WTC11 (cell line): ENCODE measurements at regions of chr18 and their contacts with region 1.

Region 1: DNA sequence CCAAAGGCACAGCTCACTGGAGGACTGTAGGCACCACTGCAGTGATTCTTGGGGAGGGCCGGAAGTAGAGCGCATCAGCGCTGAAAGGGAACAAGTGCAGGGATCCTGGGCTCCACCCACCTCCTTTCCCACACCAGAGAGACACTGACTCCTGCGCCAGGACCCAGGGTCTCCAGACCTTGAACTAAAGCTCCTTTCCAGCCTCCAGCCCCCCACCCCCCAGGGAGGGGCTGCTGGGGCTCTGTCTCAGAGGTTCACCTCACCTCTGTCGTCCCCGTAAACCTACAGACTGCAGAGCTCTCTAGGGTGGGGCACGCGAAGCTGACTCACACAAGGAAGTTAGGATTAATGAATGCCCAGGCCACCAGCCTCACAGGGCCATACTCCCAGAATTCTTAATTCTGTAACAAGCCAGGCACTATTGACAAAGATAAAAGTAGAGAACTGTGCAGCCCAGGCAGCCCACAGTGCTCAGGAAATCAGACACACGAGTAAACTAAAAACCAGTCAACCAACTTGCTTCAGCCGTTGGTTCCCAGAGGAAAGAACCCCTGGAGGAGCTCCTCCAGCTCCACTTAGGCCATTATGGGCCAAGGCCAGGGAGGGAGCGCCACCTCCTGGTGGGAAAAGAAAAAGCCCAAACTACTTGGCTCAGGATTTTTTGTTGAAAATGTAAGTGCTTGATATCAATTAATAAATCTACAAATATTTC is 45.1 kb upstream of the ACAA2 start:
- DNase-seq: peak; percentile 79
- ATAC-seq: peak; percentile 75
- H3K4me3 Mint-ChIP-seq: no peak overlapping the region
- H3K27ac Mint-ChIP-seq: peak overlapping the region; percentile 57
- H3K4me1 Mint-ChIP-seq: peaks cover 12% of the 10 kb centered on the region
- H3K27me3 Mint-ChIP-seq: no peaks in the 10 kb centered on the region
- CTCF ChIP-seq: peak; percentile 86

Region 2: DNA sequence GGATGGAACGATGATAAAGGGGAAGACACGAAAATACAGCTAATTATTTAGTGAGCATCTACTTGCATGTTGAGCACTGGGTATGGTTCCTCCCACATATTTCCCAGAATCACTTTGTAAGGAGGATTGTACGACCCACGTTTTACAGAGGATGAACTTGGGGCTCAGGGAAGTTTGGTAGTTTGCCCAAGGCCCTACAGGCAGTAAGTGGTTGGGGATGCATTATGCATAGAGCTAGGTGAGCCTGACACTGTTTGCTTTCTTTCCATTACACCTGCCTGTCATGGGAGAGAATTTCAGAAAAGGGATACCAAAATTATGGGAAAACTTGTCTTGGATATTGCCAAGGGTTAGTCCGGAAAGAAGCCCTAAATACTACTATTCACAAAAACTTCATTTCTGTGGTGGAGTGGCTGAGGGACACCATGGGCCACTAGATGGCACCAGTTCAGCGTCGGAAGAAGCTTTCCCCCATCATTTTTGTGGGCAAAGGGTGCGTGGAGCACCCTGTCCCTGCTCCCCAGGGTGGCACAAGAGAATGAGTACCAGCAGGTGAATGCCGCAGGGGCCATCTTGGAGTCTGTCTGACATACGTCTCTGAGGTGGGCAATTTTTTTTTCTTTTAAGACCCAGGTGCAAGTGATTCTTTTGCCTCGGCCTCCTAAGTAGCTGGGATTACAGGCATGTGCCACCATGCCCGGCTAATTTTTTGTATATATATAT is 347.9 kb before region 1 on chr18:
- CTCF ChIA-PET with region 1: interaction called, 51 read pairs
- POLR2A ChIA-PET with region 1: no interaction called
- DNase-seq: peak; percentile 53
- ATAC-seq: peak; percentile 78
- H3K4me3 Mint-ChIP-seq: no peak overlapping the region
- H3K27ac Mint-ChIP-seq: no peak overlapping the region
- H3K4me1 Mint-ChIP-seq: peaks cover 12% of the 10 kb centered on the region
- H3K27me3 Mint-ChIP-seq: no peaks in the 10 kb centered on the region
- CTCF ChIP-seq: peak; percentile 70

Region 3: GRCh38 chr18:49561289-49562193 is 296.9 kb before region 1 on chr18 and contains the start of gene LIPG:
- CTCF ChIA-PET with region 1: interaction called, 12 read pairs
- POLR2A ChIA-PET with region 1: interaction called, 4 read pairs
- DNase-seq: peak; percentile 67
- ATAC-seq: peak; percentile 81
- H3K4me3 Mint-ChIP-seq: peak within 1 kb of the TSS; percentile 86
- H3K27ac Mint-ChIP-seq: peak within 1 kb of the TSS; percentile 89
- H3K4me1 Mint-ChIP-seq: peaks cover 26% of the 10 kb centered on the region
- H3K27me3 Mint-ChIP-seq: peaks cover 44% of the 10 kb centered on the region
- CTCF ChIP-seq: no peak
- total RNA-seq, gene LIPG: 5.5 to 6.8 TPM (median 6.1 TPM) in 3 replicates

Region 4: DNA sequence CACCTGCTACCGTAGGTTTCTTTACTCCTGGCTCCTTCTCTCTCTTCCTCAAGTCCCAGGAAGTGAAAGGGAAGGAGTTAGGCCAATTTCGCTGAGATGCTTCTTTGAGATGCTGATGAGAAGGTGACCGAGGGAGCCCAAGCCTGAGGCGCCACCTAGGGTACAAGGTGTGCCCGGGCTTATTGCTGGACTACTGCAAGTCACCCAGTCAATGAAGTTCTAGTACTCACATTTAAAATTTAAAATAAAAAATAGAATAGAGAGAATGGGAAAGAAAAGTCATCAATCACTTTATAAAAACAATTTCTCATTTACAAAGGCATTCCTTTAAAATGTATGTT is 90.4 kb before region 1 on chr18:
- CTCF ChIA-PET with region 1: interaction called, 12 read pairs
- POLR2A ChIA-PET with region 1: no interaction called
- DNase-seq: peak; percentile 80
- ATAC-seq: peak; percentile 94
- H3K4me3 Mint-ChIP-seq: no peak overlapping the region
- H3K27ac Mint-ChIP-seq: no peak overlapping the region
- H3K4me1 Mint-ChIP-seq: peaks cover 10% of the 10 kb centered on the region
- H3K27me3 Mint-ChIP-seq: no peaks in the 10 kb centered on the region
- CTCF ChIP-seq: peak; percentile 39; the same call in 1 of the 2 replicates

Region 5: DNA sequence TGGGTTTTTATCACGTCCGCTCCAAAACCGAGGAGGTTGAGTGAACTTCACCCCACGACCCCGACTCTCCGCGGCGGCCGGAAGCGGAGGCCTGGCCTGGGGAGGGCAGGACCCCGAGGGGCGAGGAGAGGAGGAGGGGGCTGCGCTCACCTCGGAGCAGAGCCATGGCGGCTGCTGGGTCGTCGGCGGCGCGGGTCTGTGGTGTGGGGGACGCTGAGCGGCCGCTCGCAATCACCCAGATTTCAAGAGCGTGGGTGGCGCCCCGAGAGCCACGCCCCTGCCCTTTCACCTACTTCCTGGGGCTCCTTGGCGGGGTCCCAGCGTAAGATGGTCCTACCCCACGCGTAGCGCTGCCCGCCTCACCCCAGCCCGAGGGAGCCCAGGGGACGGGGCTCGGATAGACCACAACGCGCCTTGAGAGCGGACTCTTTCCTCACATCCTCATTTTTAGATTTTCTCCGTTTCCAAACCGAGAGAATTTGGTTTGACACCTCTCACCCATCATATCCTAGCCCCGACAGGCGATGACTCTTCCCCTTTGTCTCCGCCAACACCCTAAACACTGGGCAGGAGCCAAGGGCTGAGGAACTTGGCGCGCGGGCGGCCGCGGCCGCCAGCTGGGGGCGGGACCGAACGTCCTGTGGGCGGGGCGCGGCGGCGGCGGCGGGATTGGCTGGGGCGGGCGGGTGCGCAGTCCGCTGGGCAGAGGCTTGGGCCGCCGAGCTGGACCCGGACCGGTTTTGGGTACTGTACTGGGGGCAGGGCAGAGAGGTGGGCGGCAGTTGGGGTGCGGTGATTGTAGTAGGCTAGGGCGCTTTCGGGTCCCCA is 44.9 kb before region 1 on chr18 and contains the start of gene ACAA2:
- CTCF ChIA-PET with region 1: interaction called, 30 read pairs
- POLR2A ChIA-PET with region 1: no interaction called
- DNase-seq: peak; percentile 80
- ATAC-seq: peak; percentile 90
- H3K4me3 Mint-ChIP-seq: peak within 1 kb of the TSS; percentile 90
- H3K27ac Mint-ChIP-seq: peak within 1 kb of the TSS; percentile 100
- H3K4me1 Mint-ChIP-seq: peaks cover 23% of the 10 kb centered on the region
- H3K27me3 Mint-ChIP-seq: no peaks in the 10 kb centered on the region
- CTCF ChIP-seq: no peak
- total RNA-seq, gene ACAA2: 135 to 136 TPM (median 136 TPM) in 3 replicates

Region 6: GRCh38 chr18:49878567-49879270 is 20.3 kb after region 1 on chr18:
- CTCF ChIA-PET with region 1: interaction called, 10 read pairs
- POLR2A ChIA-PET with region 1: no interaction called
- DNase-seq: no peak
- ATAC-seq: no peak
- H3K4me3 Mint-ChIP-seq: no peak overlapping the region
- H3K27ac Mint-ChIP-seq: no peak overlapping the region
- H3K4me1 Mint-ChIP-seq: peaks cover 5% of the 10 kb centered on the region
- H3K27me3 Mint-ChIP-seq: no peaks in the 10 kb centered on the region
- CTCF ChIP-seq: no peak

Region 7: DNA sequence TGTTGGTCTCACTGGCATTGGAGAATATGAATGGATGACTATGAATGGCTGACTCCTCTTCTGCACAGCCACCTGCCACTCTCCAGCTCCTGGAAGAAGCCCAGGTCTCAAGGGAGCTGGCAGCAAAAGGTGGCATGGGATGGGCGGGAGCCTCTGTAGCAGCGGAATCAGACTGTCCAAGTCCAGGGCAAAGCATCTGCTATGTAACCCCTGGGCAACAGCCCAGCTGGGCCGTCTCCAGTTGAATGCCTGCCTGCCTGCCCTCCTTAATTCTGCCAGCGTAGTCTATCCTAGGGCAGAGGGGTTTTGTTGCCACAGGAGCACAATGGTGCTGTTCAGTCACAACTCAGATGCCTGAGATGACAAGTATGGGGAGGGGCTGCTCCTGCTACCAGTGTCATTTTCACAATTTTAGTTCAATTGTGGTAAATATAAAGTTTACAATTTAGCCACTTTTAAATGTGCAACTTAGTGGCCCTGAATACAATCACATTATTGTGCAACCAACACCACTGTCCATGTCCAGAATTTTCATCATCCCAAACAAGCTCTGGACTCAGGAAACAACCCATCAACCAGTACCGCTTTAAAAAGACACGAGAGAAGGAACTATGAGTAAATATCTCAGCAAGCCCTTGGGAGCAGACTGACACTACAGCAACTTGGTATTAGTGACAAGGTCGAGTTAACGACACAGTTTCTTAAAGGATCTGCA is 221.3 kb after region 1 on chr18:
- CTCF ChIA-PET with region 1: no interaction called
- POLR2A ChIA-PET with region 1: no interaction called
- DNase-seq: no peak
- ATAC-seq: no peak
- H3K4me3 Mint-ChIP-seq: no peak overlapping the region
- H3K27ac Mint-ChIP-seq: no peak overlapping the region
- H3K4me1 Mint-ChIP-seq: peaks cover 8% of the 10 kb centered on the region
- H3K27me3 Mint-ChIP-seq: no peaks in the 10 kb centered on the region
- CTCF ChIP-seq: no peak